ENCODE measurements at regions of chr3 and their contacts with region 1.

Region 1: DNA sequence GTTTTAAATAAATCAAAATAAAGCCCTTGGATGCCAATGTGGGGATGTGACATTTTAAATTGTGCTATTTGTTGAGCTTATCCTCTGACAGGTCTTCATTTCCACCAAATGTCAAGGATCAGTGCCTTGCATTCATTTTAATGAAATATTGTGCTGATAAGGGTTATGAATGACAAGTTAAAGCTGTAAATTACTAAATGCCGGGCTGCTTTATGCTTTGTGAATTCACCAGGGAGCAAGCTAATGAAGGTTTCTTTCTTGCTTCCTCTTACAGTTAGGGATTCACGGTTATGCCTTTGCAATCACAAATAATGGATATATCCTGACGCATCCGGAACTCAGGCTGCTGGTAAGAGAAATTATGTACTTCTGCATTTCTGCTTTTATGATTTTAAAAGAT is 81.7 kb downstream of the LRTM1 start:
- DNase-seq: no peak
- ATAC-seq: no peak
- H3K4me3 ChIP-seq: no peak overlapping the region
- H3K27ac ChIP-seq: no peak overlapping the region
- H3K4me1 ChIP-seq: no peaks in the 10 kb centered on the region
- H3K27me3 ChIP-seq: no peaks in the 10 kb centered on the region
- CTCF ChIP-seq: no peak
- POLR2A ChIP-seq: no peak

Region 2: DNA sequence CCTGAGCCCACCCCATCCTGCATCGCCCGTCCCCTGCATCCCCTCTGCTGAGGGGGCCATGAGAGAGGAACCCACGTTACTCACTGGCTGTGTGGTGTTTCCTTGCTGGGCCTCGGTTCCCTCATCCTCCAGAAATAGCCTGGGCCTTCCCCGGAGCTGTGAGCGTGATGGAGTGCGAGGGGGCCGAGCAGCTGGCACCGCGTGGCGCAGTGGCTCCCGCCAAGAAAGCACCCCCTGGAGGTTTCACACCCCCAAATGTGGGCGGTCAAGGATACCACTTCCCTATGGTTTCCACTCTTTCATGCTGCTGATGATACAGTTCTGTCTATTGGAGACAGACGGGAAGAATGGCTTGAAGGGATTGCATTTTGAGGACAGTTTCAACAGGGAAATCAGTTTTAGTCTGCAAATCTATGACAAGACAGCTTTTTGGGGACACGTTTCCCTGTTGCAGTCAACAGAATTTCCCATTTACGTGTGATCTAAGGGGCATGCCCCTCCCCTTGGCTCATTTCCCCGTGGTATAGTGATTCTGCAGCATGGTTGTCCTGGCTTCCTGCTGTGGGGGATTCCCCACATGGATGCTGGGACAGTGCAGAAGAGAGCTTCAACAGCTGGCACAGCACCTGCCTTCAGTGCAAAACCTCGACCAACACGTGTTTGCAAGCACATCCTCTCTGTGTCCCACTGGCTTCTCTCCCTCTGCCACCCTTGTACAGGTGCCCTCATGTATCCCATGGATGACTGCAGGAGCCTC is 295.7 kb before region 1 on chr3:
- in situ Hi-C with region 1: no loop called
- intact Hi-C with region 1: no loop called
- DNase-seq: no peak
- ATAC-seq: no peak
- H3K4me3 ChIP-seq: no peak overlapping the region
- H3K27ac ChIP-seq: no peak overlapping the region
- H3K4me1 ChIP-seq: peaks cover 0 to 5% of the 10 kb centered on the region in 2 donors
- H3K27me3 ChIP-seq: no peaks in the 10 kb centered on the region
- CTCF ChIP-seq: no peak
- POLR2A ChIP-seq: no peak

Region 3: GRCh38 chr3:54631516-54632325 is 214.4 kb before region 1 on chr3:
- in situ Hi-C with region 1: no loop called
- intact Hi-C with region 1: no loop called
- DNase-seq: no peak
- ATAC-seq: no peak
- H3K4me3 ChIP-seq: no peak overlapping the region
- H3K27ac ChIP-seq: no peak overlapping the region
- H3K4me1 ChIP-seq: no peaks in the 10 kb centered on the region
- H3K27me3 ChIP-seq: no peaks in the 10 kb centered on the region
- CTCF ChIP-seq: no peak
- POLR2A ChIP-seq: no peak

Region 4: DNA sequence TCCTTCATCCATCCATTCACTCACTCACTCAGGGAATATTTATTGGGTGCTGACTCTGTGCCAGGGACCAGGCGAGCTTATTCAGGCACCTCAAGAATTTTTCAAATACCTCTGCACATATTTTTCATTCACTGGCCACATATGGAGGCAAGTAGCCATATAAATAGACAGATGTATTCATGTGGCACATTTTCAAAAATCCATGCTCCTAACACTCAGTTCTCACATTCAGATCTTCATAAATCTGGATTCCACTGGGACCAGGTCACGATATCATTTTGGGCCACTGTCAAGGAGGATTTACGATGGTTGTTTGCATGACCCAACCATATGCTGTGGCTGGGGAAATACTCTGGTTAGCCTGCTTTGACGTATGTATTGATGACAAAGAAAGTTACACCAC is 323.5 kb after region 1 on chr3:
- in situ Hi-C with region 1: loop called in 1 of 4 experiments (anchors 10 kb)
- intact Hi-C with region 1: no loop called
- DNase-seq: no peak
- ATAC-seq: no peak
- H3K4me3 ChIP-seq: no peak overlapping the region
- H3K27ac ChIP-seq: no peak overlapping the region
- H3K4me1 ChIP-seq: peaks cover 0 to 3% of the 10 kb centered on the region in 2 donors
- H3K27me3 ChIP-seq: no peaks in the 10 kb centered on the region
- CTCF ChIP-seq: no peak
- POLR2A ChIP-seq: no peak